ENCODE measurements at regions of chr5 and their contacts with region 1.

Region 1: DNA sequence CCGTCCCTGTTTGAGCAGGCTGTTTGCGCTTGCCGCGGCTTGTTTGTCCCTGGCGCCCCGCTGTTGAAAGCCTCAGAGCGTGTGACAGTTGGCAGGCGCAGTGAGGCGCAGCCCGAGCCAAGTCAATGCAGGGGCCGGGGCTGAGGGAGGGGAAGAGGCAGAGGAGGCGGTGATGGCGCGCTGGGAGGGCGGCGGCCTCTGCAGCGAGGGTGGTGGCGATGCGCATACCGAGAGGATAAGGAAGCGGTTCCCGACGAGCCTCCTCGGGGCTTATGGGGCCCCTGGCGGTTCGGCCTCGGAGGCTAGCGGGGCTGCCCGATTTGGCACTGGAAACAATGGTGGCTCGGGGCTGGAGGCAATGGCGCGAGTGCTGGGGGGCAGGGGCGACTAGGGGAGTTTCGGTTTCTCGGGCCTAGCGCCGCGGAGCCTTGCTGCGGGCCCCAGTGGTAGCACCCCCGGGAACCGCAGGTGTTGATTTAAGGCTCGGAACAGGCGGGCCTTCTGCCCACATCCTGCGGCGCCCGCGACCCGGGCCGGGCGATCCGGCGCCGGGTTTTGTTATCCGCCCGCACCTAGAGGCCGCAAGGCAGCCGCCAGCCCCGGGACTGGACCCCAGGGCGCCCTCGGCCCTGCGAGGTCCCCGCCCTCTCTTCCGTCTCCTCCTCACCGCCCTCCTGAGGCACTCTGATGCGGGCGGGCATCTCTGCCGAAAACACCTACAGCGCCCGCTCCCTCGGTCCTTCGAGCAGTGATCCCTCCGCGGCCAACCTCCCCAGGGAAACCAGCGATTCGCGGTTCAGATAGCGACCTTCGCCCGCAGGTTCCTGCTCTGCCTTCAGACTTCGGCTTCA is 947 bp upstream of the LNPEP start:
- DNase-seq: peak; percentile 93
- H3K4me3 Mint-ChIP-seq: peak overlapping the region; percentile 85
- H3K27ac Mint-ChIP-seq: peak overlapping the region; percentile 99
- H3K4me1 Mint-ChIP-seq: peaks cover 51% of the 10 kb centered on the region
- H3K27me3 Mint-ChIP-seq: no peaks in the 10 kb centered on the region

Region 2: GRCh38 chr5:96702503-96703383 is 232.2 kb before region 1 on chr5:
- CTCF ChIA-PET with region 1: no interaction called
- intact Hi-C with region 1: loop called (anchors 1 kb)
- DNase-seq: peak; percentile 89
- H3K4me3 Mint-ChIP-seq: peak overlapping the region; percentile 87
- H3K27ac Mint-ChIP-seq: peak overlapping the region; percentile 88
- H3K4me1 Mint-ChIP-seq: peaks cover 47% of the 10 kb centered on the region
- H3K27me3 Mint-ChIP-seq: no peaks in the 10 kb centered on the region

Region 3: DNA sequence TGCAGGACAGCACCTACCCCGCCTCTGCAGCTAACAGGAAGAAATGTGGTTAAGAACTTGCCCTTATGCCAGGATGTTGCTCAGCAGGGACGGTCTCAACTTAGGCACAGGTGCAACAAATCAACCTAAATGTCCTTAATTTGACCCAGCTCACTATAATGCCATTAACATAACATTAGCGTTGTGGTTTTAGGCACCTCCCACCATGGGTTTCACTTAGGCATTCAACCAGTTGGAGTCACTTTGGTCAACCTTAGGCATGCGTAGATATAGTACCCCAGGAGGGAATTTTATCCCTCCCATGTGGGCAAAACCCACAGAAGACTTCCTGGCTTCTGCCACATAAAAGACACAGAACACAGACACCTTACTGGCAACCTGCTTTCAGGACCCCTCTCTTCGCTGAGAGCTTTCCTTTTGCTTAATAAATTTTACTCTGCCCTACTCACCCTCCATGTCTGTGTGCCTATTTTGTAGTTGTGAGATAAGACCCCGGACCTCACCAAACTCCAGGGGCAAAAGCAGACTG is 118.5 kb before region 1 on chr5:
- CTCF ChIA-PET with region 1: no interaction called
- intact Hi-C with region 1: loop called (anchors 2 kb)
- DNase-seq: peak; percentile 84
- H3K4me3 Mint-ChIP-seq: peak overlapping the region; percentile 71
- H3K27ac Mint-ChIP-seq: peak overlapping the region; percentile 91
- H3K4me1 Mint-ChIP-seq: peaks cover 80% of the 10 kb centered on the region
- H3K27me3 Mint-ChIP-seq: no peaks in the 10 kb centered on the region

Region 4: GRCh38 chr5:96896806-96897205 is 38.1 kb before region 1 on chr5:
- CTCF ChIA-PET with region 1: interaction called, 4 read pairs
- intact Hi-C with region 1: loop called (anchors 1 kb)
- DNase-seq: peak; percentile 79
- H3K4me3 Mint-ChIP-seq: peak overlapping the region; percentile 79
- H3K27ac Mint-ChIP-seq: peak overlapping the region; percentile 98
- H3K4me1 Mint-ChIP-seq: peaks cover 62% of the 10 kb centered on the region
- H3K27me3 Mint-ChIP-seq: no peaks in the 10 kb centered on the region

Region 5: DNA sequence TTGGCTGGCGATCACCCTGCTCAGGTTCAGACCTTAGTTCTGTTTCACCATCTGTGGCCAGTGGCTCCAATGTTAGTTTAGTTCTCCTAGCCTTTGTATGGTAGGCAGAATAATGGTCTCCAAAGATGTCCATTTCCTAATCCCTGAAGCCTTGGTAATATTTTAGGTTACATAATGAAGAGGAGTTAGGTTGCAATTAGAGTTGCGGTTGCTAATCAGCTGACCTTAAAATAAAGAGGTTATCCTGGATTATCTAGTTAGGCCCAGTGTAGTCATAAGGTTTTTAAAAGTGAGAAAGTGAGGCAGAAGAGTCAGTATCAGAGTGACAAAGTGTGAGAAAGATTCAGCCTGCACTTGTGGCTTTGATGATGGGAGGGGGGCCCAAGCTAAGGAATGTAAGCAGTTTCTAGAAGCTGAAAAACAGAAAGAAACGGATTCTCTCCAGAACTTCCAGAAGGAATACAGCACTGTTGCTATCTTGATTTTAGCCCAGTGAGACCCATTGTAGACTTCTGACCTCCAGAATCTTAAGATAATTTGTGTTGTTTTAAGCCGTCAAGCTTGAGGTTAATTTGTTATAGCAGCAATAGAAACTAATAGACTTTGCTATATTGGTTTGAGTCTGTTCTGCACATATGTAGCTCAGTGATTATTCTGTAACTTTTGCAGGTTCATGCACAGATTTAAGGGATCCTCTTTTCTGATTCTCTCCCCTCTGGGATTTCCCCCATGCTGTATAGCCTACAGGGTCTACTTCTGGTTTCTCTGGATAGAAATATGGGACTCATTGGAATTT is 22.5 kb after region 1 on chr5:
- CTCF ChIA-PET with region 1: interaction called, 3 read pairs
- intact Hi-C with region 1: loop called (anchors 1 kb)
- DNase-seq: peak; percentile 73
- H3K4me3 Mint-ChIP-seq: peak overlapping the region; percentile 64
- H3K27ac Mint-ChIP-seq: peak overlapping the region; percentile 86
- H3K4me1 Mint-ChIP-seq: peaks cover 77% of the 10 kb centered on the region
- H3K27me3 Mint-ChIP-seq: no peaks in the 10 kb centered on the region

Region 6: DNA sequence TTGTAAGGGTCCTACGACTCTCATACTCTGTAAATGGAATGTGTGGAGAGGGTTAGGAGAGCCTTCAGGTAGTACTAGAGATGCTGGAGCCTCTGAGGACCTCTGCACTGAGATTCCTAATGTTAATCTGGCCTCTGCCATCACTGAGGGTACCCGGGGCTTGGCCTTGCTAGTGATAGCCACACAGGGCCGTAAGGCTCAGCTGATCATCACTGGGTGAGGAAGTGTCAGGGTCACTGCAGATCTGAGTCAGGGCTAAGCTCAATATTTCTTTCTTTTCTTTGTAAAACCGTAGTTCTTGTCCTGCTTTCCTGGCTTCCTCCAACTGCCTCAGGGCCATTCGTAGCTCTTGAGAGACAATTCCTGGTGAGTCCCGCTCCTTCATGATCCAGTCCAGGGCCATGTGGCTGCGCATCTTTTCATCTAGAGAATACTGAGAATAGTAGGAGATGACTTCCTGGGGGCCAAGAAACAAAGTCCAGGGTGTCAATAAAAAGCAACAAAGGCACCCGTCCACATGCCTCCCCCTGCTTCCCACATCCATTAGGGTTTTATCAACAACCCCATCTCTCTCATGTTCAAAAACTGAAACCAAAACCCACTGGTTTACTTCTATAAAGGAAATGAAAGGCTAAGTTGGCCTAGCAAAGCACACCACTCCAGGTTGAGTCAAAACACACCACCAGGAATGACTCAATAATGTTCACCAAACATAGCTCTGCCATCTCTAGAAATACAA is 159.8 kb after region 1 on chr5:
- CTCF ChIA-PET with region 1: no interaction called
- intact Hi-C with region 1: loop called (anchors 1 kb)
- DNase-seq: peak; percentile 68
- H3K4me3 Mint-ChIP-seq: no peak overlapping the region
- H3K27ac Mint-ChIP-seq: no peak overlapping the region
- H3K4me1 Mint-ChIP-seq: peaks cover 16% of the 10 kb centered on the region
- H3K27me3 Mint-ChIP-seq: peaks cover 6% of the 10 kb centered on the region

Region 7: DNA sequence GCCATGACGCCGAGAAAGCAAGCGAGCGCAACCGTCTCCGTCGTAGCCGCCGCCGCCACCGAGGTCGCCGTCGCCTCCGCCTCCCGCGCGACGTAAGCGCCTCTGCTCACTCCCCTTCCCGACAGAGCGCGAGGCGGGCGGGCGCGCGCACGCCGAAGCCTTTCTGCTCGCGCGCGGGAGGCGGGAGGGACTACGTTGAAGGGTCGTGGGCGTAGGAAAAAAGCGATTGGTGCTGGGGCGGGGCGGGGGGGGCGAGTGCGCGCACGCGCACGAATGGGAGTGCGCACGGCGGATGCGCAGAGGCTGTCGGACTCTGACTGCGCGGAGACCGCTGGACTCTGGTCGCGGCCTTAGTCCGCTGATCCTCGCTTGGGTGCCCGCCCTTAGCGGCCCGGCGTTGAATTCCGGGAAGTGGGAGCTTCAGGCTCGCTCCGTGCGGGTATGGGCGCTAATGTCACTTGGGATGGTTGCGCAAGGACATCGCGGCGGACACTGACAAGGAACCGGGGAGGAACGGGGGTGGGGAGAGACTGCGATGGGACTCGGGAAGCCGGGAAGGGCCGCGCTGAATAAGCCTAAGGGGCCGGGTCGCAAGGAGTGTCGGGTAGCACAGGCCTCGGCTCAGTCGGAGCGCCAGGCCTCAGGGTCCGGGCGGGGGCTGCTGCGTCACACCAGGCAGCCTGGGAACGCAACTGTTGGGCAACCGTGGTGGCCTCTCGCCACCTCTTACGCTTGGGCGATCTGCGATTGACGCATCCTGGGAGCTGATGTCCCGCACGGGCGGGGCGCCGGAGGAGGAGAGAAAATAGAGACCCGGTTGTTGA is 1994.2 kb after region 1 on chr5 and contains the start of gene CHD1:
- CTCF ChIA-PET with region 1: no interaction called
- intact Hi-C with region 1: loop called (anchors 1 kb)
- DNase-seq: peak; percentile 97
- H3K4me3 Mint-ChIP-seq: peak within 1 kb of the TSS; percentile 93
- H3K27ac Mint-ChIP-seq: peak within 1 kb of the TSS; percentile 100
- H3K4me1 Mint-ChIP-seq: peaks cover 57% of the 10 kb centered on the region
- H3K27me3 Mint-ChIP-seq: no peaks in the 10 kb centered on the region
- total RNA-seq, gene CHD1: 50.5 to 52.1 TPM